Activated B cell treated with CpG ODN at 0.5 μM for 24 hours (primary cell): ENCODE measurements at regions of chr3 and their contacts with region 1.

Region 1: DNA sequence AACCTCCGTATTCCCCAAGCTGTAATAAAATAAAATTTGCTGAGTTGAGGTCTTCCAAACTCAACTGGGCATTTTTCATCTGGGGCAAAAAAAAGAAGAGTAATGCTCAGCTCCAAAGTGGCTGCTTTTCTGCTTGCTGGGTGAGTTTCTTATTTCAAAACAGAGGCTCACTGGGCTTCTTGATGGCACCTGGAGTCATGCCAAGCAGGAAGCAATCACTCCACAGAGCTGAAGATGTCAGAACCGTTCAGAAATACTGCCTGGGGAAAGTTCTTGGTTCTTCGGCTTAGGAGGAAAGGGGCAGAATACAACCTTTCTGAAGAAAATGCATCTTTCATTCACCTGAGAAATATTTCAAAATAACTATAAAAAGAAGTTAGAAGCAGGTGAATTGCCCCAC is 4.1 kb downstream of the CCR9 start:
- DNase-seq: no peak
- ATAC-seq: no peak
- H3K4me3 Mint-ChIP-seq: peak overlapping the region; percentile 25
- H3K27ac Mint-ChIP-seq: peak overlapping the region; percentile 54
- H3K4me1 Mint-ChIP-seq: peaks cover 70% of the 10 kb centered on the region
- H3K27me3 Mint-ChIP-seq: no peaks in the 10 kb centered on the region
- CTCF ChIP-seq: no peak

Region 2: DNA sequence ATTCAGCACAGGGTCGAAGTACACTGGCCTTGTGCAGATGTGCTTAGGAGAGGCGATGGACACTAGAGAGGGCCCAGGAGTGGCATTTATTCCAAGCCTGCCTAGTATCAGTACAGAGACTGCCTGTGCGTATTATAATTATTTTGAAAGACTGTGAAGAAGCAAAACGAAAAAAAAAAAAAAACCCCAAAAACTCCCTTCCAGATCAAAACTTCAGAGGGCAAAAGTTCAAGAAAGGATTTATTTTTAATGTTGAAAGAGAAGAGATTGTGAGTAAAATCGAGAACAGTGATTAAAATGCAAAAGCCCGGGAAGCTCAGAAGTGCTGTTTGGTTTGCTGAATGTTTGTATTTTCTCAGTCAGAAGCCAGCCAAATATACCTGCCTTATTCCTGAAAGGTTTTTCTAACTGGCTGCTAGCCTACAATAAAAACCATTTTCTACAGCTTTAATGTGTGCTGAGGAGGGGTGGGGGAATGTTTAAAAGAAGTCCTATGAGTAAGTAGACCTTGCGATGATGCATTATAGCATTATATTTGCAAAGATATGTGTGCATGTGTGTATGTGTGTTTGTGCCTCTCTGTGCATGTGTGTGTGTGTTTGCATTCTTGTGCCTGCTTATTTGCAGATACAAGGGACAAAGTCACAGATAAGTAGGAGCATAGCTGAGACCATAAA is 29.2 kb before region 1 on chr3:
- CTCF ChIA-PET with region 1: no interaction called
- POLR2A ChIA-PET with region 1: no interaction called
- intact Hi-C with region 1: loop called (anchors 5 kb)
- DNase-seq: no peak
- ATAC-seq: peak; percentile 26
- H3K4me3 Mint-ChIP-seq: peak overlapping the region; percentile 20
- H3K27ac Mint-ChIP-seq: peak overlapping the region; percentile 41
- H3K4me1 Mint-ChIP-seq: peaks cover 46% of the 10 kb centered on the region
- H3K27me3 Mint-ChIP-seq: no peaks in the 10 kb centered on the region
- CTCF ChIP-seq: no peak

Region 3: DNA sequence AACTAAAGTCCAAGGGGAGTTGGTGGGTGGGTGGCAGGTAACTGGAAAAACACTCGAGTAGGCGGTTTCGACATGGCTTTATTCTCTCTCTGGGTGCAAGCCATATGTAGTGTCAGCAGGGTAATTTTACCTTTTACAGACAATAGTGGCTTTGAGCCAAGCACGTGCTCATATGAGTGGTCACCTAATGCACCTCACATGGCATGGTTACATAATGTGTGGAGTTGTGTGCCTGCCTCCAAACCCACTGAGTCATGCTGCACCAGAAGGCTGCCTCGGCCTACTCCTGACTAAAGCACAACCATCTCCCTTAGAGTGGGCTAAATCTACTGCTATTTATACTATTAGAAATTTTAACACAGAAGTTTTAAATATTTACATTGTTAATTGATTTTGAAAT is 533.2 kb after region 1 on chr3:
- CTCF ChIA-PET with region 1: no interaction called
- POLR2A ChIA-PET with region 1: no interaction called
- intact Hi-C with region 1: no loop called
- DNase-seq: no peak
- ATAC-seq: no peak
- H3K4me3 Mint-ChIP-seq: no peak overlapping the region
- H3K27ac Mint-ChIP-seq: no peak overlapping the region
- H3K4me1 Mint-ChIP-seq: no peaks in the 10 kb centered on the region
- H3K27me3 Mint-ChIP-seq: no peaks in the 10 kb centered on the region
- CTCF ChIP-seq: no peak